Activated CD8-positive, alpha-beta memory T cell treated with anti-CD3 and anti-CD28 coated beads, Interleukin-2, amount 10 ng/mL, durations not matched to agents 7 days and 5 days (primary cell): ENCODE measurements at regions of chr2 and their contacts with region 1.

Region 1: GRCh38 chr2:230987137-230988020 is 8.5 kb upstream of the SPATA3 start:
- DNase-seq: peak; percentile 81
- ATAC-seq: peak; percentile 43
- H3K4me3 Mint-ChIP-seq: peak overlapping the region; percentile 53
- H3K27ac Mint-ChIP-seq: peak overlapping the region; percentile 69
- H3K4me1 Mint-ChIP-seq: peaks cover 44% of the 10 kb centered on the region
- H3K27me3 Mint-ChIP-seq: peaks cover 37% of the 10 kb centered on the region

Region 2: DNA sequence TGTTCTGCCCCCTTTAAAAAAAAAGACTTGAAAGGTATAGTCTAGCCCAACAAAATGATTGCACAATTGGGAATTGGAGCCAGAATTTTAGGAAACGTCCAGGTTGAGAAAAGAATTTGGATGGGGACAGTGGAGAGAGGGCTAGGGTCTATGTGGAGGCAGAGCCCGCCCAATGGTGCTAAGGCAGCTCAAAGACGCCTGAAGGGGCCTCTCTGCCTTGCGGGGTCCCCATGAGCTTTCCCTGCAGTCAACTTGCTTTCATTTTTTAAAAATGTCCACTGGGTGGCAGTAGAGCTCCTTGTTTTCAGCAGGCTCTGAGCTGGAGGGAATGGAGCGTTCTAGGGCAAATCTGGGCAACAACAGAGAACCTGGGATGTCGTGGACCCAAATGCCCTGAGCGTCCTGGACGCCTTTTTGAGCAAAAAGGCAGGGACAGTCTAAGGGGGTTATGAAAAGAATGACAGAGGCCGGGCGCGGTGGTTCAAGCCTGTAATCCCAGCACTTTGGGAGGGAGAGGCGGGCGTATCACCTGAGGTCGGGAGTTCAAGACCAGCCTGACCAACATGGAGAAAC is 162.9 kb before region 1 on chr2:
- CTCF ChIA-PET with region 1: interaction called, 76 read pairs
- DNase-seq: peak; percentile 71
- ATAC-seq: peak; percentile 82
- H3K4me3 Mint-ChIP-seq: peak overlapping the region; percentile 37
- H3K27ac Mint-ChIP-seq: peak overlapping the region; percentile 60
- H3K4me1 Mint-ChIP-seq: peaks cover 11% of the 10 kb centered on the region
- H3K27me3 Mint-ChIP-seq: peaks cover 36% of the 10 kb centered on the region

Region 3: GRCh38 chr2:230847883-230848388 is 139.4 kb before region 1 on chr2:
- CTCF ChIA-PET with region 1: interaction called, 73 read pairs
- DNase-seq: peak; percentile 93
- ATAC-seq: peak; percentile 98
- H3K4me3 Mint-ChIP-seq: no peak overlapping the region
- H3K27ac Mint-ChIP-seq: no peak overlapping the region
- H3K4me1 Mint-ChIP-seq: peaks cover 9% of the 10 kb centered on the region
- H3K27me3 Mint-ChIP-seq: peaks cover 64% of the 10 kb centered on the region

Region 4: GRCh38 chr2:230902180-230902899 is 85.0 kb before region 1 on chr2:
- CTCF ChIA-PET with region 1: interaction called, 309 read pairs
- DNase-seq: peak; percentile 76
- ATAC-seq: peak; percentile 64
- H3K4me3 Mint-ChIP-seq: no peak overlapping the region
- H3K27ac Mint-ChIP-seq: no peak overlapping the region
- H3K4me1 Mint-ChIP-seq: peaks cover 59% of the 10 kb centered on the region
- H3K27me3 Mint-ChIP-seq: peaks cover 23% of the 10 kb centered on the region

Region 5: DNA sequence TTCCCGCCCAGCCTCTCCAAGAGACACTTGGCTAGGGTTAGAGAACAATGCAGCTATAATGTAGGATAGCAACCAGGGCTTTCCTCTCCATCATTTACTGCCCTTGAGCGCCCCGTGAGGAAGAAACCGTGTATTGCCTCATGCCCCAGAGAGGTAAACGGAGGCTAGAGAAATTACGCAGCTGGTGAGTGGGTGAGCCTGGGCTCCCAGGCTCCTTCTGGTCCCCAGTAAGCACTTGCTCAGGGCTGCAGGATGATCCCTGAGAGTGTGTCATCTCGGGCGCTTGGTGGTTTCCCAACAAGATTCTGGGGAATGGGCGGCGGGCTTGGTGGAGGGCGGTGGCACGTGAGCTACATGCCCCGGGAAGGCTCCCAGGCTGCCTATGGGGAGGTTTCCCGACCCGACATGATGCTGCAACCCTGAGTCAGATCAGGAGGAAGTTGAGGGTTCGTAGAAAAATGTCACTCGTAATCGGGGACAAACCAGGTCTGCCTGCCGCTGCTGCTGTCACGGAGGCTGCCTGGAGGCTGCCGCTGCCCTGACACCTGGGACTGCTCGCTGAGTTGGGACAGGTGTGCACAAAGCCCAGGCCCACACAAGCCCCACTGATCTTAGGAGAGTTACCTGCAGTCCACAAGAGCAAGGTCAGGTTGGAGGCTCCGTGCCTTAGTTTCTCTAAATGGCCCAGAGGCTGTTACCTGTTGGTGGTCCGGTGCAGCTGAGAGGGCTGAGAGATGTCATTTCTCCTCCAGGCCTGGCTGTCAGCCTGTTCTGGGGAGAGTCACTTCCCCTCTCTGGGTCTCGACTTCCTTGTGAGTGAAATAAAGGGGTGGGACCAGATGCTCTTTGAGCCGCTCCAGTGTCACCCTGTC is 62.7 kb before region 1 on chr2 and contains the start of gene GPR55:
- CTCF ChIA-PET with region 1: interaction called, 190 read pairs
- DNase-seq: peak; percentile 86
- ATAC-seq: peak; percentile 54
- H3K4me3 Mint-ChIP-seq: peak within 1 kb of the TSS; percentile 83
- H3K27ac Mint-ChIP-seq: peak within 1 kb of the TSS; percentile 96
- H3K4me1 Mint-ChIP-seq: peaks cover 59% of the 10 kb centered on the region
- H3K27me3 Mint-ChIP-seq: peaks cover 10% of the 10 kb centered on the region
- total RNA-seq, gene GPR55: 42.1 to 58.8 TPM

Region 6: GRCh38 chr2:230956827-230957755 is 30.3 kb before region 1 on chr2:
- CTCF ChIA-PET with region 1: interaction called, 13 read pairs
- DNase-seq: peak; percentile 80
- ATAC-seq: peak; percentile 88
- H3K4me3 Mint-ChIP-seq: peak overlapping the region; percentile 76
- H3K27ac Mint-ChIP-seq: peak overlapping the region; percentile 95
- H3K4me1 Mint-ChIP-seq: peaks cover 68% of the 10 kb centered on the region
- H3K27me3 Mint-ChIP-seq: peaks cover 65% of the 10 kb centered on the region

Region 7: DNA sequence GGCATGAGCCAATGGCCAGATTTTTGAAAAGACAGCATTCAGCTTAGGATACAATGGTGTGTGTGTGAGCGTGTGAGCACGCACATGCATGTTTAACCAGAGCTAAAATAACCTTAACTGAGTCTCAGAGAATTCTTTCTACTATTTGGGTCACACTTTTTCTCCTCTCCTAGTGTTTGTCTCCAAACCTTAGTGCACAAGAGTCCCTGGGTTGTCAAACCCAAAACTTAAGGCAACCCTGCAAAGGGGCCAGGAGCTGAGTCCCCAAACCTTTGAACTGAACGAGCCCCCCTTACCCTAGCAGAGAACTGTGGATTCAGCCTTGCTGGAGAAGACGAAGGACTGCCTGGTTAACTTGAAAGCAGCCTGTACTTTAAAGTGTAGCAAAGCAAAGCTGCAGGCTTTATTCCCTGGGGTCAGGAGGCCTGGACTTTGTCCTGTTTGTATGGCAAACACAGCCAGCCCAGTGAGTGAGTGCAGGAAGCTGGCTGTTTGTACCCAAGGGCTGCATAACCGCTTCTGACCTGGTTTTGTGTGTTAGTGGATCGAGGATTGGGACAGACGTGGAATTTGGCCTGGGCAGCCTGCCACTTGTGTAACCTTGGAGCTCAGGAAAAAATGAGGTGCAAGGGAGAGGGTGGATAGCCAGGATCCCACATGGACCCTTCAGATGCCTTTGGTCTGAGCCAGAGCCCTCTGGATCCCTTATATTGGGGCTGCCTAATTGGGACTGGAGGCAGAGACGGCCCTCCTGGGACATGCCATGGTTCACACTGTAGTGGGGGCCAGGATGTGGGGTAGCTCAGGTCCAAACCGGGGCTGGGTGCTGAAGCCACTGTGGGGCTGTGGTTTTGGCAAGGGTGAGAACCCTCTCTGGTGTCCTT is 62.9 kb after region 1 on chr2:
- CTCF ChIA-PET with region 1: interaction called, 11 read pairs
- DNase-seq: peak; percentile 70
- ATAC-seq: no peak
- H3K4me3 Mint-ChIP-seq: no peak overlapping the region
- H3K27ac Mint-ChIP-seq: no peak overlapping the region
- H3K4me1 Mint-ChIP-seq: peaks cover 38% of the 10 kb centered on the region
- H3K27me3 Mint-ChIP-seq: peaks cover 45% of the 10 kb centered on the region

Region 8: DNA sequence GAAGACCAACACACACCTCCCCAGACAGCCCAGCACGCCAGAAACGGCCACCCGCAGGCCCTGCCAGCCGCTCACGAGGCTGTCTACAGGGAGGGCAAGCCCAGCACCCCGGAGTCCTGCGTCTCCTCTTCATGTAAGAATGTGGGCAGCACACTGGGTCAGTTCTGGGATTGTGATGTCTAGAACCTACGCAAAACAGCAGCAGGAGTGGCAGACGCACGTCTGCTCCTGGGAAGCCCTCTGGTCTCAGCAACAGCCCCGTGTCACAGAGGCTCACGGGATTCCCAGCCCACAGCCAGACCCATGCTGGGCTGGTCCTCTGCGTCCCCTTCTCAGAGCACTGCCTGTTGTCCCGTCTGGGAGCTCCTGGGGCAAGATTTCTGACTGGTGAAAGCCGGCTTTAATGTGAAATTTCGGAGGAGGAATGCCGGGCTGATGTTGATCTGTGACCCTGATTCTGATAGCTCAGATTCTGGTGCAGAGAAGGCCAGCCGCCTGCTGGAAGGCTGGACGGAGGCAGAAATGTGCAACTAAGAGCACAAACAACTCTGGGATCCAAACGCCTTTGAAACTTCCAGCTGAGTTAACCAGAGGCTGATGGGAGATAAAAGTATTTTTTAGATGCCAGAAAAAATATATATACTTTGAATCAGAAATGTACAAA is 368.6 kb after region 1 on chr2:
- CTCF ChIA-PET with region 1: no interaction called
- DNase-seq: no peak
- ATAC-seq: no peak
- H3K4me3 Mint-ChIP-seq: no peak overlapping the region
- H3K27ac Mint-ChIP-seq: no peak overlapping the region
- H3K4me1 Mint-ChIP-seq: no peaks in the 10 kb centered on the region
- H3K27me3 Mint-ChIP-seq: no peaks in the 10 kb centered on the region